Activated B cell treated with CpG ODN at 0.5 μM for 24 hours (primary cell): ENCODE measurements at regions of chr10 and their contacts with region 1.

Region 1: DNA sequence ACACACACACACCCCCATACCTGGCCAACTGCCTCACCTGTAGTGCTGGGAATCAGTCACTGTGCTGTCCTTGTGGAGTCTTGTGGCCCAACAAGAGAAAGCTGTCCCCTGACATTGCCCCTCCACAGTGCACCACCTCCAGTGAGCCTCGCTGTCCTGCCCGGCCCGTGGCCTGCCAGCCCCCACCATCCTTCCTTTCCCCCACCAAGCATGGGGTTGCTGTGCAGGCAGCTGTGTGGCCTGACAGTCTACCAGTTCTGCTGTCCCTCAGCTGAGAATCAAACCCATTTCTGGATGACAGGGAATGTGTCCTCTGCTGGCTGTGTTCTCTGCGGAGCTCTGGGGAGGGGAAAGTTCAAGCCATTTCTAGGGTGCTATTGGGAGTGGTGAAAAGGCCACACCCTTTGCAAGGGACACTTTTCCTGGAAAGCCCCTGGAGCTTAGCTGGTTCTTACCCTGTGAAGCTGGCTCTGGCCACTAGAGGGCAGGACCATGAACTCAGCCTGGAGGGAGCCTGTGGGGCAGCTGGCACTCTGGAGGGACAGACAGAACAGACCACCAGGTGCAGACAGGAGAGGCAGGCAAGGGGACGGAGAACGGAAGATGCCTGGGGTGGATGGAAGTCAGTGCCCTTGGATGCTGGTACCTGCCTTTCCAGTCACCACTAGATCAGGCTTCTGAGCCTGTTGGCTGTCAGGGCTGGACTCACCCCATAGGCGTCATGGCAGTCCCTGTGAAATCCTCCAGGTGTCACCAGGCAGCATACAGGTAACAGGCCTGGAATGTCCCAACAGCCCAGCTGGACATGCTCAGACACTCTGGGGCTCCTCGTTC is 10.5 kb upstream of the MTPAP start:
- DNase-seq: peak; percentile 51
- ATAC-seq: peak; percentile 94
- H3K4me3 Mint-ChIP-seq: no peak overlapping the region
- H3K27ac Mint-ChIP-seq: no peak overlapping the region
- H3K4me1 Mint-ChIP-seq: peaks cover 5% of the 10 kb centered on the region
- H3K27me3 Mint-ChIP-seq: peaks cover 6% of the 10 kb centered on the region
- CTCF ChIP-seq: no peak

Region 2: GRCh38 chr10:30348378-30348776 is 11.2 kb before region 1 on chr10:
- CTCF ChIA-PET with region 1: interaction called, 21 read pairs
- POLR2A ChIA-PET with region 1: interaction called, 5 read pairs
- intact Hi-C with region 1: no loop called
- DNase-seq: no peak
- ATAC-seq: no peak
- H3K4me3 Mint-ChIP-seq: peak overlapping the region; percentile 99
- H3K27ac Mint-ChIP-seq: peak overlapping the region; percentile 95
- H3K4me1 Mint-ChIP-seq: peaks cover 46% of the 10 kb centered on the region
- H3K27me3 Mint-ChIP-seq: no peaks in the 10 kb centered on the region
- CTCF ChIP-seq: no peak

Region 3: GRCh38 chr10:30433730-30434272 is 74.2 kb after region 1 on chr10 and contains the start of gene MAP3K8:
- CTCF ChIA-PET with region 1: no interaction called
- POLR2A ChIA-PET with region 1: no interaction called
- intact Hi-C with region 1: no loop called
- DNase-seq: peak; percentile 90
- ATAC-seq: peak; percentile 71
- H3K4me3 Mint-ChIP-seq: peak within 1 kb of the TSS; percentile 95
- H3K27ac Mint-ChIP-seq: peak within 1 kb of the TSS; percentile 94
- H3K4me1 Mint-ChIP-seq: peaks cover 71% of the 10 kb centered on the region
- H3K27me3 Mint-ChIP-seq: no peaks in the 10 kb centered on the region
- CTCF ChIP-seq: no peak
- total RNA-seq, gene MAP3K8: 141 and 160 TPM in 2 replicates

Region 4: GRCh38 chr10:30534465-30535144 is 175.0 kb after region 1 on chr10:
- CTCF ChIA-PET with region 1: interaction called, 3 read pairs
- POLR2A ChIA-PET with region 1: no interaction called
- intact Hi-C with region 1: loop called (anchors 1 kb)
- DNase-seq: peak; percentile 40
- ATAC-seq: peak; percentile 45
- H3K4me3 Mint-ChIP-seq: no peak overlapping the region
- H3K27ac Mint-ChIP-seq: peak overlapping the region; percentile 69
- H3K4me1 Mint-ChIP-seq: peaks cover 42% of the 10 kb centered on the region
- H3K27me3 Mint-ChIP-seq: no peaks in the 10 kb centered on the region
- CTCF ChIP-seq: peak; percentile 57